ENCODE measurements at regions of chr3 and their contacts with region 1.

Region 1: DNA sequence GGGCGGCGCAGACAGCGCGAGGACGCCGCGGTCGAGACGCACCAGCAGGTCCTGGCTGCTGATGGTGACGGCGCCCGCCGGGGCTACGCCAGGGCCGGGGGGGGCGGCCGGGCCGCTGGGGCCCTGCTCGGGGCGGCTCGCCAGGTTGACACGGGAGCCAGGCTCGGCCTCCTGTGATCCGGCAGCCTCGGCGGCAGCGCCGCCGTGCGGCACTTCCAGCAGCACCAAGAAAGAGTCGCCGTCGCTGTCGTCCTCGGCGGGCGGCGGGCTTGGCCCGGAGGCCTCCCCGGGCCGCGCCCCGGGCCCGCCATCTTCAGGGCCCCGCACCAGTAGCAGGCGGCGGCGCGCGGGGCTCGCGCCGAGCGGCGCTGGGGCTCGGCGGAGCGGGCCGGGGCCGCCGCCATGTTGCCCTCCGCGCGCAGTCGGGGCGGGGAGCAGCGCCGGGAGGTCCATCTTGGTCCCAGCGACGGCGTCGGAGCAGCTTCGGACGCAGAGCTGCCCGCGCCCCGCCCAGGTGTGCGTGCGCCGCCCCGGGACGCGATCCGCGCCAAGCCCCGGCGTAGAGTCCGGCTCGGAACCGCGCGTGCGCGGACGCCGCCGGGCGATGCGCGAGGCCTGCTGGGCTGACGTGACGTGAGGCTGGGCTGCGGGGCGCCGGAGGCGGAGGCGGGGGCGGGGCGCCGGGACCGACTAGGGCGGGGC is at the start of gene ZXDC:
- DNase-seq: peak; percentile 85 to 97 (median 92)
- ATAC-seq: peak; percentile 81
- H3K4me3 ChIP-seq: peak within 1 kb of the TSS; percentile 68 to 72
- H3K4me3 Mint-ChIP-seq: peak within 1 kb of the TSS; percentile 88
- H3K27ac ChIP-seq: peak within 1 kb of the TSS; percentile 72 to 84
- H3K27ac Mint-ChIP-seq: peak within 1 kb of the TSS; percentile 89
- H3K4me1 ChIP-seq: peaks cover 37% of the 10 kb centered on the region
- H3K4me1 Mint-ChIP-seq: peaks cover 46% of the 10 kb centered on the region
- H3K27me3 ChIP-seq: no peaks in the 10 kb centered on the region
- H3K27me3 Mint-ChIP-seq: no peaks in the 10 kb centered on the region
- CTCF ChIP-seq: peak; percentile 25
- total RNA-seq, gene ZXDC: 60.7 to 62.8 TPM

Region 2: DNA sequence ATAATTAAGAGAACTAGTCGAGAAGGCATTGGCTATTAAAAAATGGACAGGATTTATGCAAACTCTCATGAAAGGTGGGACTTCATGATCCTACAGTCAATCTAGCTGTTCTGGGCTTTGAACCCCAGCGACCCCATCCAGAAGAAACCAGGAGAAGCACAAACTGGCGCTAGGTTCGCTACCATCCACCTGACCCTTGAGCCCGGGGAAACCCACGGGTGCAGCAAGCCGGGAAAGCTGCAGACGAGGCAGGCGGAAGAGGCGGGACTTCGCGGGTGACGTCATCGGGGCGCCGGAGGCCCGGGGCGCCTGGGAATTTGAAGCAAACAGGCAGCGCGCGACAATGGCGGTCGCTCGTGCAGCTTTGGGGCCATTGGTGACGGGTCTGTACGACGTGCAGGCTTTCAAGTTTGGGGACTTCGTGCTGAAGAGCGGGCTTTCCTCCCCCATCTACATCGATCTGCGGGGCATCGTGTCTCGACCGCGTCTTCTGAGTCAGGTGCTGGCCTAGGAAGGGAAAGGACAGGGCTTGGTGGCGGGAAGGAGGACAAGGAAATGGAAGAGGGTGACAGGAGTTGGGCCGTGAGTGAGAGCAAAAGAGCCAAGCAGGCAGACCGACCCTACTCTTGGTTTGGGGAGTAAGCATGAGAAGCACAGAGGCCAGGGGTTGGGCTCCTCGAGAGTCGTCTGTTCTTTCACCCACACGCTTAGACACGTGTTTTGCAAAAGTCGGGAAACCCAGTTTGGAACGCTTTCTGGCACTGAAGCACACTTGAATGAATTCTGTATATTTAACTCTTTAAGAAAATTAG is 1745.2 kb before region 1 on chr3 and contains the start of gene UMPS:
- CTCF ChIA-PET with region 1: no interaction called
- POLR2A ChIA-PET with region 1: no interaction called
- intact Hi-C with region 1: loop called in 1 of 2 experiments (anchors 5 kb)
- DNase-seq: peak; percentile 82 to 95 (median 93)
- ATAC-seq: peak; percentile 91
- H3K4me3 ChIP-seq: peak within 1 kb of the TSS; percentile 96 to 97
- H3K4me3 Mint-ChIP-seq: peak within 1 kb of the TSS; percentile 99
- H3K27ac ChIP-seq: peak within 1 kb of the TSS; percentile 82 to 93
- H3K27ac Mint-ChIP-seq: peak within 1 kb of the TSS; percentile 99
- H3K4me1 ChIP-seq: peaks cover 29% of the 10 kb centered on the region
- H3K4me1 Mint-ChIP-seq: peaks cover 39% of the 10 kb centered on the region
- H3K27me3 ChIP-seq: peaks cover 0 to 4% of the 10 kb centered on the region in 2 experiments
- H3K27me3 Mint-ChIP-seq: peaks cover 10% of the 10 kb centered on the region
- CTCF ChIP-seq: no peak
- total RNA-seq, gene UMPS: 16.7 to 19.8 TPM

Region 3: GRCh38 chr3:125916376-125916978 is 559.1 kb before region 1 on chr3:
- CTCF ChIA-PET with region 1: no interaction called
- POLR2A ChIA-PET with region 1: no interaction called
- intact Hi-C with region 1: loop called in 1 of 2 experiments (anchors 5 kb)
- DNase-seq: peak; percentile 89 to 98 (median 94)
- ATAC-seq: peak; percentile 94
- H3K4me3 ChIP-seq: peak overlapping the region; percentile 61 to 81
- H3K4me3 Mint-ChIP-seq: peak overlapping the region; percentile 90
- H3K27ac ChIP-seq: peak overlapping the region; percentile 74 to 84
- H3K27ac Mint-ChIP-seq: peak overlapping the region; percentile 96
- H3K4me1 ChIP-seq: peaks cover 6% of the 10 kb centered on the region
- H3K4me1 Mint-ChIP-seq: peaks cover 19% of the 10 kb centered on the region
- H3K27me3 ChIP-seq: no peaks in the 10 kb centered on the region
- H3K27me3 Mint-ChIP-seq: no peaks in the 10 kb centered on the region
- CTCF ChIP-seq: peak; percentile 18

Region 4: GRCh38 chr3:126654571-126655383 is 179.2 kb after region 1 on chr3 and contains the start of gene TXNRD3:
- CTCF ChIA-PET with region 1: no interaction called
- POLR2A ChIA-PET with region 1: no interaction called
- intact Hi-C with region 1: loop called (anchors 2 to 5 kb)
- DNase-seq: peak; percentile 52 to 87 (median 78)
- ATAC-seq: peak; percentile 97
- H3K4me3 ChIP-seq: peak within 1 kb of the TSS; percentile 35 to 58
- H3K4me3 Mint-ChIP-seq: peak within 1 kb of the TSS; percentile 88
- H3K27ac ChIP-seq: peak within 1 kb of the TSS in 1 of 2 experiments; percentile 27
- H3K27ac Mint-ChIP-seq: peak within 1 kb of the TSS; percentile 55
- H3K4me1 ChIP-seq: peaks cover 3% of the 10 kb centered on the region
- H3K4me1 Mint-ChIP-seq: peaks cover 10% of the 10 kb centered on the region
- H3K27me3 ChIP-seq: no peaks in the 10 kb centered on the region
- H3K27me3 Mint-ChIP-seq: no peaks in the 10 kb centered on the region
- CTCF ChIP-seq: no peak
- total RNA-seq, gene TXNRD3: 1.6 to 1.7 TPM

Region 5: GRCh38 chr3:127598841-127599570 is 1123.4 kb after region 1 on chr3:
- CTCF ChIA-PET with region 1: no interaction called
- POLR2A ChIA-PET with region 1: no interaction called
- intact Hi-C with region 1: loop called (anchors 2 to 5 kb)
- DNase-seq: no peak
- ATAC-seq: no peak
- H3K4me3 ChIP-seq: peak overlapping the region; percentile 53 to 60
- H3K4me3 Mint-ChIP-seq: peak overlapping the region; percentile 78
- H3K27ac ChIP-seq: peak overlapping the region; percentile 53 to 69
- H3K27ac Mint-ChIP-seq: peak overlapping the region; percentile 76
- H3K4me1 ChIP-seq: peaks cover 11% of the 10 kb centered on the region
- H3K4me1 Mint-ChIP-seq: peaks cover 15% of the 10 kb centered on the region
- H3K27me3 ChIP-seq: no peaks in the 10 kb centered on the region
- H3K27me3 Mint-ChIP-seq: no peaks in the 10 kb centered on the region
- CTCF ChIP-seq: no peak

Region 6: DNA sequence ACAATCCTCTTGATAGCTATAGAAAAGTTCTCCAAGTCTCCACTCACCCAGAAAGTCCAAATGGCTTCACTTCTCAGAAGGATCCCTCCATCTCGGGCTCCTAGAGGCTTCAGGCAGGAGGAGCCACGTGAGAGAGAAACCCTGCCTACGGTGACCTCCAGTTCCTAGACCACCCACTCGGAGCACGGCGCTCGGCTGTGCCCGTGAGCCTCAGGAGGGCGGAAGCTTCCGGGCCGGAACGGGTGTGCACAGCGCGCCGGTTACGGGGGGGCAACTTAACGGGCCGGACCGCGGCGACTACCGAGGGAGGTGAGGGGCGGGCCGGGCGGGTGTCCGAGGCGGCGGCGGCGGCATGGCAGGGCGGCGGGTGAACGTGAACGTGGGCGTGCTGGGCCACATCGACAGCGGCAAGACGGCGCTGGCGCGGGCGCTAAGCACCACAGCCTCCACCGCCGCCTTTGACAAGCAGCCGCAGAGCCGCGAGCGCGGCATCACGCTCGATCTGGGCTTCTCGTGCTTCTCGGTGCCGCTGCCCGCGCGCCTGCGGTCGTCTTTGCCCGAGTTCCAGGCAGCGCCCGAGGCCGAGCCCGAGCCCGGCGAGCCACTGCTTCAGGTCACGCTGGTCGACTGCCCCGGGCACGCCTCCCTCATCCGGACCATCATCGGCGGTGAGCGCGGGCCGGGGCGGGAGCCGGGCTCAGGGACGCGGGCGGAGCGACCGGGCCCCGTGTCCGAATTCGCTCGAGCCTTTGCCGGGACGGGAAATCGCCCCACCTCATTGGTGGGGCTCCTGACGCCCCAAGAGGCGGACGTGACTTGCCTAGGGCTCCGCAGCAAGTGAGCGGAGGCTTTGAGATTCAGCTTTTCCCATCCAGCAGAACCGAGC is 1677.8 kb after region 1 on chr3 and contains the start of gene EEFSEC:
- CTCF ChIA-PET with region 1: no interaction called
- POLR2A ChIA-PET with region 1: interaction called, 3 read pairs
- intact Hi-C with region 1: loop called in 1 of 2 experiments (anchors 10 kb)
- DNase-seq: peak; percentile 77 to 92 (median 84)
- ATAC-seq: peak; percentile 90
- H3K4me3 ChIP-seq: peak within 1 kb of the TSS; percentile 61 to 74
- H3K4me3 Mint-ChIP-seq: peak within 1 kb of the TSS; percentile 87
- H3K27ac ChIP-seq: peak within 1 kb of the TSS; percentile 65 to 77
- H3K27ac Mint-ChIP-seq: peak within 1 kb of the TSS; percentile 89
- H3K4me1 ChIP-seq: peaks cover 14% of the 10 kb centered on the region
- H3K4me1 Mint-ChIP-seq: peaks cover 42% of the 10 kb centered on the region
- H3K27me3 ChIP-seq: no peaks in the 10 kb centered on the region
- H3K27me3 Mint-ChIP-seq: no peaks in the 10 kb centered on the region
- CTCF ChIP-seq: no peak
- total RNA-seq, gene EEFSEC: 10.8 to 11.6 TPM